Activated CD4-positive, alpha-beta T cell treated with anti-CD3 and anti-CD28 coated beads for 36 hours (primary cell): ENCODE measurements at regions of chr5 and their contacts with region 1.

Region 1: DNA sequence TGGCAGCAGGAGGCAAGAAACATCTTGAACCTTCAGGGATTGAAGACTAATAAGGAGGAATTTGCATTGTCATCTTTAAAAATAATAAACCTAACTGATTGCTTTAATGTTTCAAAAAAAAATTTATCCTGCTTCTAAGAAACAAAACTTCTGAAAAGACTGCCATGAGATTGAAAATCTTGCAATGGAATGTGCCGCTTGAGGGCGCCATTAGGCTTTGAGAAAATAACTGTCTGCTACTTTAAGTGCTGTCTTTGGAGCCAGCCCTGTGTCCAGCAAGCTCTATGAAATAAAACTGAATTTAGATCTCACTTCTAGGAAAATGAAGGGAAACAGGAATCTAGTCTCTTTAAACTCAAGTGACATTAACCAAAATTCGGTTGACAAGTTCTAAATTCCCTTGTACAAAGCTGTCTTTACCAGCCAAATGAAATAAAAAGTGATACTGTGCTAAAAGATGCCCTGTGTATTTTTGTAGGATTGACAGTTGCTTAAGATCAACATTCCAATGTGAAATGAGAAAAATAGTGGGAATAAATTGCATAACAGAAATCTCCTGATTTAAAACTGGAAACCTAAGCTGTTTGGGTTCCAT is 79.4 kb downstream of the ESM1 start:
- DNase-seq: peak; percentile 84
- ATAC-seq: no peak
- H3K4me3 Mint-ChIP-seq: no peak overlapping the region
- H3K27ac Mint-ChIP-seq: no peak overlapping the region
- H3K4me1 Mint-ChIP-seq: peaks cover 11% of the 10 kb centered on the region
- H3K27me3 Mint-ChIP-seq: peaks cover 40% of the 10 kb centered on the region

Region 2: DNA sequence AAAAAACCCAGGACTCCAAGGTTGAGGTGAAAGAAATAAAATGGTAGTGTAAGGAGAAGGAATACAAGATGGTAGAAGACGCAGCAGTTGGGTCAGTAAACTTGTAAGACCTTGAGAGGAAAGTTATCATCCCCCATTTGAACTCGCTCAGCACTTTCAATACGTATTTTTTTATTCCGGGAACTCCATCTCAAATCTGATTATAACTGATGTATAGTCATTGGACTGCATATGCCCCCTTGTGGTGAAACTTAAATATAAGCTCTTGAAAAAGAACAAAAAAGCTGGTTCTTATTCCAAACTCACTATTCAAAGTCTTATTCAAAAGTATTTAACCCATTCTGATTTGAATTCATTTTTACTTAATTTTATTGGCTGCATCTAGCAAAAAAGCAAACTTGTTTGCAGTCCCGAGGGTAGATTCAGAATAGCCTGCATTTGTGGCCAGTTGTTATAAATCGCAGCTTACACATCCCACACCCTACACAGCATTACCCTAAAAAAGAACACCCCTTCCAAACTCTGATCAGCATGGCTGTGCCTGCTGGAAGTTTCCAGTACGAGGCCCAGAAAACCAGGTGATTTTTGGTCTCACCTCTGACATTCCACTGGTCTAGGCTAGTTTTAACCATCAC is 38.6 kb before region 1 on chr5:
- CTCF ChIA-PET with region 1: interaction called, 11 read pairs
- POLR2A ChIA-PET with region 1: no interaction called
- intact Hi-C with region 1: loop called (anchors 1 kb)
- DNase-seq: no peak
- ATAC-seq: no peak
- H3K4me3 Mint-ChIP-seq: no peak overlapping the region
- H3K27ac Mint-ChIP-seq: no peak overlapping the region
- H3K4me1 Mint-ChIP-seq: peaks cover 29% of the 10 kb centered on the region
- H3K27me3 Mint-ChIP-seq: peaks cover 34% of the 10 kb centered on the region

Region 3: GRCh38 chr5:54959673-54960418 is 53.8 kb after region 1 on chr5:
- CTCF ChIA-PET with region 1: interaction called, 17 read pairs
- POLR2A ChIA-PET with region 1: interaction called, 3 read pairs
- intact Hi-C with region 1: loop called (anchors 1 kb)
- DNase-seq: peak; percentile 69
- ATAC-seq: no peak
- H3K4me3 Mint-ChIP-seq: no peak overlapping the region
- H3K27ac Mint-ChIP-seq: no peak overlapping the region
- H3K4me1 Mint-ChIP-seq: no peaks in the 10 kb centered on the region
- H3K27me3 Mint-ChIP-seq: peaks cover 5% of the 10 kb centered on the region

Region 4: DNA sequence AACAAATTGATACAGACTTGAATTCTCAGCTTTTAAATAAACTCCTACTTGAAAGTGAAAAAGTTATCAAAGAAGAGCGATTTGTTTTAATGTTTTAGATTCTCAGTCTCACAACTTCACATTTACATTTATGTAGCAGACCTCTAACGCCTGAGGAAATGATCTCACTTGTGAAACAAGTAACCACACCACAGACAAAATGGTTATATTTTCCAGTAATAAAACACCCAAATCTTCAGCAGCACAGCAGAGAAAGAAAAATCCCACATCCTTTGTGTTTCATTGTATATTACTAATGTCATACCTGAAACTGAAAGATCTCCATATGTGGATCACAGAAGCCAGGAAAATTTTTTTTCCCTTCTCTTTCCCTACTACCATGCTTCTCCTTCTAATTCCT is 166.6 kb after region 1 on chr5:
- CTCF ChIA-PET with region 1: interaction called, 7 read pairs
- POLR2A ChIA-PET with region 1: no interaction called
- intact Hi-C with region 1: loop called in 1 of 2 experiments (anchors 2 kb)
- DNase-seq: no peak
- ATAC-seq: peak; percentile 83
- H3K4me3 Mint-ChIP-seq: peak overlapping the region; percentile 23
- H3K27ac Mint-ChIP-seq: peak overlapping the region; percentile 52
- H3K4me1 Mint-ChIP-seq: peaks cover 33% of the 10 kb centered on the region
- H3K27me3 Mint-ChIP-seq: peaks cover 2% of the 10 kb centered on the region

Region 5: DNA sequence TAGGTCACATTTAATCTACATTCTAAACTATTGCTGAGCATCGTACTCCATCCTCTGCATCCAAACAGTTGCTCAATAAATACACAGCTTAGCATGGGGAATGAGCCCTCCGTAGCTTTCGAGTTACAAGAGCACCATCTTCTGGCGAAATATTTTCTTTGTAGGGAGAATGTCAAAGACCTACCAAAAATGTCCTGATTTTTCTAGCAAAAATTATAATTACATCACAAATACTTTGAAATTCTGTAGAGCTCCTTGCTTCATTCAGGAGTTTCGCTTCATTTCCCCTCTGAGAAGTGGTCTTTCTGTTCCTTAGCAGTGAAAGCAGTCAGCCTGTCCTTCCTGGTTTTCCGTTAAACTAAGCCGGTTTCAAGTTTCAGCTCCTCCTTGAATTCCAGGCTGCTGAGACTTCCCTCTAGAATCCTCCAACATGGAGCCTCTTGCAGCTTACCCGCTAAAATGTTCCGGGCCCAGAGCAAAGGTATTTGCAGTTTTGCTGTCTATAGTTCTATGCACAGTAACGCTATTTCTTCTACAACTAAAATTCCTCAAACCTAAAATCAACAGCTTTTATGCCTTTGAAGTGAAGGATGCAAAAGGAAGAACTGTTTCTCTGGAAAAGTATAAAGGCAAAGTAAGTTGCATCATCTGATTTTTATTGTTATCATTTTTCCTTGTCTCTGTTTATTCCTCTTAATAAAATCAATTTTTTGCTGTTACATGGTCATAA is 253.9 kb after region 1 on chr5 and contains the start of gene GPX8:
- CTCF ChIA-PET with region 1: interaction called, 67 read pairs
- POLR2A ChIA-PET with region 1: no interaction called
- intact Hi-C with region 1: loop called in 1 of 2 experiments (anchors 1 kb)
- DNase-seq: peak; percentile 27
- ATAC-seq: peak; percentile 57
- H3K4me3 Mint-ChIP-seq: no peak within 1 kb of the TSS
- H3K27ac Mint-ChIP-seq: no peak within 1 kb of the TSS
- H3K4me1 Mint-ChIP-seq: no peaks in the 10 kb centered on the region
- H3K27me3 Mint-ChIP-seq: peaks cover 37% of the 10 kb centered on the region
- total RNA-seq, gene GPX8: not detected